H1 (cell line): ENCODE measurements at regions of chr3 and their contacts with region 1.

Region 1: GRCh38 chr3:46953234-46954010 is 23.1 kb downstream of the CCDC12 start:
- DNase-seq: no peak
- H3K4me3 ChIP-seq: no peak overlapping the region
- H3K27ac ChIP-seq: no peak overlapping the region
- H3K4me1 ChIP-seq: peaks cover 5 to 14% (median 8%) of the 10 kb centered on the region in 4 experiments
- H3K27me3 ChIP-seq: no peaks in the 10 kb centered on the region
- CTCF ChIP-seq: no peak
- EP300 ChIP-seq: no peak
- POLR2A ChIP-seq: no peak
- RAD21 ChIP-seq: no peak

Region 2: DNA sequence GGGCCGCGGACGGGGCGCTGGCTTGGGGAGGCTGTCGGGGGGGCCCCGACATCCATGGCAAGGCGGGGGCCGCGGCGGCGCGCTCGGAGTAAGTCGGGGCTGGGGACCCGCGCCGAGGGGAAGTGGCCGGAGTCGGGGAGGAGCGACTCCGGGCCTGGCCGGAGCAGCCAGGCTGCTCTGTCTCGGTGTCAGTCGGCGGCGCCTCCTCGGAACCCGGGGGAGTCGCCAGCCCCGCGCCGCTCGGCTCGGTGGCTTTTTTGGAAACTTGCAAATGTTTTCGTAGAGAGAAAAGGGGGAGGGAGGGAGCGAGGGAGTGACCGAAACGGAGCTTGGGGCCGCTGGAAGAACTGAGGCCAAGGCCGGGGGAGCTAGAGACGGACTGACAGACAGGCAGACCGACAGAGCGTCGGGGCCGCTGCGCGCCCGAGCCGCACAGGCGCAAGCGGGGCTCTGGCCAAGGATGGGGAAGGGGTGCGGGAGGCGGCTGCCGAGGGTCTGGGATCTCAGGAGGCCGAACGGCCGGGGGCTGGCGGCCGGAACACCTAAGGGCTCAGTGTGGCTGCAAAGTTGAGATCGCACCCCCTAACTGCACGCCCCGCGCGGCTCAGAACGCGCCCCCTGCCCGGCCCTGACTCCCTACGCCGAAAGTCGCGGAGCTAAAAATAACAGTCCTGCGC is 70.9 kb before region 1 on chr3:
- CTCF ChIA-PET with region 1: no interaction called
- POLR2A ChIA-PET with region 1: no interaction called
- DNase-seq: peak in 1 of 2 experiments; percentile 78
- H3K4me3 ChIP-seq: peak overlapping the region; percentile 57 to 75 (median 64)
- H3K27ac ChIP-seq: no peak overlapping the region
- H3K4me1 ChIP-seq: peaks cover 0 to 10% (median 5%) of the 10 kb centered on the region in 4 experiments; a peak in 6 of 7 replicates
- H3K27me3 ChIP-seq: peaks cover 53 to 93% (median 84%) of the 10 kb centered on the region in 4 experiments
- CTCF ChIP-seq: no peak
- EP300 ChIP-seq: no peak
- POLR2A ChIP-seq: no peak
- RAD21 ChIP-seq: no peak

Region 3: GRCh38 chr3:46935168-46935858 is 18.1 kb before region 1 on chr3:
- CTCF ChIA-PET with region 1: interaction called, 12 read pairs
- POLR2A ChIA-PET with region 1: no interaction called
- DNase-seq: peak in 1 of 2 experiments; percentile 64
- H3K4me3 ChIP-seq: 0 out of 8 replicates have a peak overlapping the region, but pooled peaks of 1 of the 4 experiments have one; percentile 17
- H3K27ac ChIP-seq: peak overlapping the region; percentile 53; the same call in 1 of the 2 replicates
- H3K4me1 ChIP-seq: peaks cover 4 to 14% (median 10%) of the 10 kb centered on the region in 4 experiments; a peak in 6 of 7 replicates
- H3K27me3 ChIP-seq: no peaks in the 10 kb centered on the region
- CTCF ChIP-seq: peak; percentile 52 to 72 (median 60)
- EP300 ChIP-seq: no peak
- POLR2A ChIP-seq: no peak
- RAD21 ChIP-seq: peak; percentile 40 to 47

Region 4: DNA sequence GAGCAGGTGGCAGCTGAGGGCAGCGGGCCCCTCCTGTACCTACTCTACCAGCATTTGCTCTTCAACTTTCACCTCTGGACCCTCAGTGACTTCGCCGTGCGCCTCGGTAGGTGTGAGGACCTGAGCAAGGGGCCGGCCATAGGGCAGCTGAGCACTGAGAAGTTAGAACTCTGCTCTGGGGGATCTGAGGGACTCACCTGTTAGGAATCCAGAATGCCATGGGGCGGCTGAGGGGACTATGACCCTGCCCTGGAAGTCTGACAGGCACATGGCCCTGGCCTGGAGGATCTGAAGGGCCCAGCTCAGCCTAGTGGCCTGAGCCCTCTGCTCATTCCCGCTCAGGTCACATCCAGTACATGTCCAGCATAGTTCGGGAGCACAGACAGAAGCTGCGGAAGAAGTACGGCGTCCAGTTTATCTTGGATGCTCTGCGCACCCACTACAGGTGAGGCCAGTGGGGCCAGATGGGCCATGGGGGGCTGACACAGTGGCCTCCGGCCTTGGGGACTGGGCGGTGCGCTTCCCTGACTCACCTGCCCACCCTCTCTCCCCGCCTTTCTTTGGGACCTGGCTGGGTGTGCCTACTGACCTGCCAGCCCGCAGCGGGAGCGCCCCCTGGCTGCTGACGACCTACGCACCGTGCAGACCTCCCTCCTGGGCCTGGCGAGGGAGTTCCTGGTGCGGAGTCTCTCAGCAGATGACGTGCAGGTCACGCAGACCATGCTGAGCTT is 44.9 kb after region 1 on chr3:
- CTCF ChIA-PET with region 1: interaction called, 10 read pairs
- POLR2A ChIA-PET with region 1: no interaction called
- DNase-seq: peak; percentile 74 to 96
- H3K4me3 ChIP-seq: no peak overlapping the region
- H3K27ac ChIP-seq: no peak overlapping the region; the same call in 1 of the 2 replicates
- H3K4me1 ChIP-seq: peaks cover 0 to 3% (median 1%) of the 10 kb centered on the region in 4 experiments; a peak in 3 of 7 replicates
- H3K27me3 ChIP-seq: no peaks in the 10 kb centered on the region
- CTCF ChIP-seq: peak in 2 of 3 experiments; percentile 97 to 98; a peak in 3 of 4 replicates
- EP300 ChIP-seq: no peak
- POLR2A ChIP-seq: no peak
- RAD21 ChIP-seq: peak; percentile 86 to 96